Activated T-helper 2 cell treated with anti-CD3 and anti-CD28 coated beads, Interferon-gamma antibody, Interleukin-2, Interleukin-4, amounts not matched to agents 10 μg/mL and 5 μg/mL and 100 μg/mL, durations not matched to agents 14 hours and 24 hours and 36 hours (primary cell): ENCODE measurements at regions of chr3 and their contacts with region 1.

Region 1: DNA sequence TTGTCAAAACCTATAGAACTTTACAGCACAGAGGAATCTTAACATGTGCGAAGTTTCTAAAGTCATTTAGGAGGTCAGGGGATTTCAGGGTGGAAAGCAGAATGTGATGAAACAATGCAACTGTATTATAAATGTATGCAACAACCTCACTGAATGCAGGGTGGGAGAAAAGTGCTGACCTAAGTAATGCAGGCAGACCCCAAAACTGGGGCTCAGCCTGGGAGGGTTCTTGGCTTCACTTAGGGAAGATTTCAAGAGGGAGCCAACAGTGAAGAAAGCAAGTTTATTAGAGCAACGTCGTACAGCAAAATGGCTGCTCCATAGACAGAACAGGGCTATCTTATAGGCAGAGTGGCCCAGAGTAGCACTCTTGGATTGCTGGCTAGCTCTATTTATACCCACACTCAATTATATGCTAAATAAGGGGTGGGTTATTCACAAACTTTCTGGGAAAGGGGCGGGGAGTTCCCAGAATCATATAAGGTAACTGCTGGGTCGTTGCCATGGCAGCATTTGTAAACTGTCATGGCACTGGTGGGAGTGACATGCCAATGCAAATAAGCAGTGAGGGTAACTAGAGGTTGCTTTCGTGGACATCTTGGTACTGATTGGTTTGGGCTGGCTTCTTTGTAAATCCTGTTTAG is 14.2 kb upstream of the CAND2 start:
- DNase-seq: no peak
- H3K4me3 Mint-ChIP-seq: no peak overlapping the region
- H3K27ac Mint-ChIP-seq: no peak overlapping the region
- H3K4me1 Mint-ChIP-seq: no peaks in the 10 kb centered on the region
- H3K27me3 Mint-ChIP-seq: peaks cover 21% of the 10 kb centered on the region

Region 2: DNA sequence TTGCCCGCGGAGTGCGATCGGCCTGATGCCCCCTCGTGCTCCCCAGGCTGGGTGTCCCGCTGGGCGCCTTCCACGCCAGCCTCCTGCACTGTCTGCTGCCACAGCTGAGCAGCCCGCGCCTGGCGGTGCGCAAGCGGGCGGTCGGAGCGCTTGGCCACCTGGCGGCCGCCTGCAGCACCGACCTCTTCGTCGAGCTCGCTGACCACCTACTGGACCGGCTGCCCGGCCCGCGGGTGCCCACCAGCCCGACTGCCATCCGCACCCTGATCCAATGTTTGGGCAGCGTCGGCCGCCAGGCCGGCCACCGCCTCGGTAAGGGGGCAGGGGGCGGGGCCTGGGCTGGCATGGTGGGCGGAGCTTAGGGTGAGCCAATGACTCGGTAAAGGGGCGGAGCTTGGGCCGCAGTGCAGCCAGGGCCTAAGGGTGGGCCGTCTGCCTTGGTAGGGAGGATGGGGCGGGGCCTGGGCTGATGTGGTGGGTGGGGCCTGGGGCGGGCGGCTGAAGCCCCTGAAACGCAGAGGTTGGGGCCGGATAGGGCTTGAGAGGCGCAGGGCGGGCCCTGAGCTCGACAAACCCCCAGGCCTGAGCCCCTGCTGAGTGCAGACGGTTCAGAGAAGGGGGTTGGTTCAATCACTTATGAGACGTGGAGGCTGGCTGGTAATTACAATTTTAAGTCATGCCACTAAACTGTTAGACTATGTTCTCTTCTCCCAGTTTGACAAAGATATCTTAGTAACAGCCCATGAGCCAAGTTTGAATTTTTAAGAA is 27.9 kb after region 1 on chr3:
- intact Hi-C with region 1: loop called (anchors 1 kb)
- DNase-seq: peak; percentile 85
- H3K4me3 Mint-ChIP-seq: peak overlapping the region; percentile 51
- H3K27ac Mint-ChIP-seq: no peak overlapping the region
- H3K4me1 Mint-ChIP-seq: peaks cover 3% of the 10 kb centered on the region
- H3K27me3 Mint-ChIP-seq: peaks cover 10% of the 10 kb centered on the region

Region 3: GRCh38 chr3:12891985-12892839 is 109.9 kb after region 1 on chr3:
- intact Hi-C with region 1: loop called (anchors 1 kb)
- DNase-seq: peak; percentile 20
- H3K4me3 Mint-ChIP-seq: no peak overlapping the region
- H3K27ac Mint-ChIP-seq: no peak overlapping the region
- H3K4me1 Mint-ChIP-seq: peaks cover 4% of the 10 kb centered on the region
- H3K27me3 Mint-ChIP-seq: peaks cover 24% of the 10 kb centered on the region